ENCODE measurements at regions of chr13 and their contacts with region 1.

Region 1: DNA sequence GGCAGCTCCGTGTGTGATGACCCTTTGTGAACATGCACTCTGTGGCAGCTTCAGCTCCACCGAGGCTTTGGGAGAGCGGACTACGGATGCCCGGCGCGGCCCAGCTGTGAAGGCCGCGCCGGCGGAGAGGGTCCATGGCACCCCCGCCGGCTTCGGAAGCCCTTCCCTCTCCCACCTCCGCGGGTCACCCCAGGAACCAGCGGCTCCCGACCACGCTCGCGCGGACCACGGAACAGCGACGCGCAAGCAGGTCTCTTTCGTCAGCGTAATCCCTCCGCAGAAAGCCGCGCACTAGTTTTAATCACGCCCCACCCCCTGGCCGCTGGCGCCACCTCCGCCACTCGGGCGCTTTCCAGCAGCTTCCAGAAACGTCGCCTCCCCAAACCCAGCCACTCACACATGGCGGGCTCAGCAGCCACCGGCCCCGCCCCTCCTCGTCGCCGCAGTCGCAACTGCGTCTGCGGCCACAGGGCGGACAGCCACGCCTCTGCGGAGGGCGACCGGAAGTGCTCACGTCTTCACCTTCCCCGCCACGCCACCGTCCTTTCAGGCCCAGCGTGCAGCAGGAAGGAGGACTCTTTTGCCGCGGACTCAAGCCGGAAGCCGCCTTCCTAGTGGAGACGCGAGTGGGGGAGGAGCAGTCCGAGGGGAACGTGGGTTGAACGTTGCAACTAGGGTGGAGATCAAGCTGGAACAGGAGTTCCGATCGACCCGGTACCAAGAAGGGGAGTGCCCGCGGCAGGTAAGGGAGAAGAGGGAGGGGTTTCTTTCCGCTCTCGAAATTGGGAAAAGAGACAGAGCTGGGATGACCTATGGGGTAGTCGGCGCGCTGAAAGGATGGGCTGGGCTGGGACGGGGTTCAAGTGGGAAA is at the start of gene USPL1:
- DNase-seq: peak; percentile 98
- ATAC-seq: peak; percentile 84
- H3K4me3 Mint-ChIP-seq: no peak within 1 kb of the TSS
- H3K27ac Mint-ChIP-seq: no peak within 1 kb of the TSS
- H3K4me1 Mint-ChIP-seq: peaks cover 37% of the 10 kb centered on the region
- H3K27me3 Mint-ChIP-seq: no peaks in the 10 kb centered on the region
- CTCF ChIP-seq: no peak
- total RNA-seq, gene USPL1: 29.1 and 33.6 TPM in 2 replicates

Region 2: GRCh38 chr13:29595380-29596063 is 1022.0 kb before region 1 on chr13 and contains the start of gene SLC7A1:
- CTCF ChIA-PET with region 1: no interaction called
- POLR2A ChIA-PET with region 1: interaction called, 6 read pairs
- intact Hi-C with region 1: loop called (anchors 2 kb)
- DNase-seq: peak; percentile 82
- ATAC-seq: peak; percentile 87
- H3K4me3 Mint-ChIP-seq: peak within 1 kb of the TSS; percentile 91
- H3K27ac Mint-ChIP-seq: peak within 1 kb of the TSS; percentile 88
- H3K4me1 Mint-ChIP-seq: peaks cover 33% of the 10 kb centered on the region
- H3K27me3 Mint-ChIP-seq: peaks cover 1% of the 10 kb centered on the region
- CTCF ChIP-seq: no peak
- total RNA-seq, gene SLC7A1: 83.5 and 85.0 TPM in 2 replicates

Region 3: GRCh38 chr13:30306762-30307193 is 310.8 kb before region 1 on chr13:
- CTCF ChIA-PET with region 1: no interaction called
- POLR2A ChIA-PET with region 1: interaction called, 20 read pairs
- intact Hi-C with region 1: loop called (anchors 1 kb)
- DNase-seq: peak; percentile 86
- ATAC-seq: peak; percentile 86
- H3K4me3 Mint-ChIP-seq: peak overlapping the region; percentile 90
- H3K27ac Mint-ChIP-seq: peak overlapping the region; percentile 85
- H3K4me1 Mint-ChIP-seq: peaks cover 72% of the 10 kb centered on the region
- H3K27me3 Mint-ChIP-seq: no peaks in the 10 kb centered on the region
- CTCF ChIP-seq: no peak

Region 4: GRCh38 chr13:30408319-30409101 is 209.0 kb before region 1 on chr13:
- CTCF ChIA-PET with region 1: no interaction called
- POLR2A ChIA-PET with region 1: interaction called, 6 read pairs
- intact Hi-C with region 1: loop called (anchors 1 kb)
- DNase-seq: peak; percentile 85
- ATAC-seq: peak; percentile 94
- H3K4me3 Mint-ChIP-seq: peak overlapping the region; percentile 62
- H3K27ac Mint-ChIP-seq: peak overlapping the region; percentile 79
- H3K4me1 Mint-ChIP-seq: peaks cover 53% of the 10 kb centered on the region
- H3K27me3 Mint-ChIP-seq: no peaks in the 10 kb centered on the region
- CTCF ChIP-seq: no peak

Region 5: DNA sequence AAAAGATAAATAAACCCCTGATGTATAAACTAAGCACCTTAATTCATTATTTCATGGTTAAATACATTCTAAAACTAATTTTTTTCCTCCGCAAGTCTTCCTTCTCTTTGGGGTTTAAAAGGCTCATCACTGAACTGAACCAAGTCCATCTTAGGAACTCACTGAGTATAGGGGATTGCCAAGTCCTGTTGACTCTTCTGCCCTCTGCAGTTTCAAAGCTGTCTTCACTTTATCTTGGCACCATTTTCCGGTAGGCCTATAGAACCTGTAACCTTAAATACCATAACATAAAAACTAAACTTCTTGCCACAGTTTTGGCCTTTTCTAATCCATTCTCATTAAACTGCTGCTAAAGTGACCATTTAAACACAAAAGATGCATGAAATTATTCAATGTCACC is 66.4 kb before region 1 on chr13:
- CTCF ChIA-PET with region 1: interaction called, 3 read pairs
- POLR2A ChIA-PET with region 1: no interaction called
- intact Hi-C with region 1: loop called (anchors 1 kb)
- DNase-seq: no peak
- ATAC-seq: peak; percentile 85
- H3K4me3 Mint-ChIP-seq: no peak overlapping the region
- H3K27ac Mint-ChIP-seq: no peak overlapping the region
- H3K4me1 Mint-ChIP-seq: peaks cover 11% of the 10 kb centered on the region
- H3K27me3 Mint-ChIP-seq: no peaks in the 10 kb centered on the region
- CTCF ChIP-seq: no peak

Region 6: GRCh38 chr13:30639671-30640070 is 22.1 kb after region 1 on chr13:
- CTCF ChIA-PET with region 1: no interaction called
- POLR2A ChIA-PET with region 1: interaction called, 9 read pairs
- intact Hi-C with region 1: loop called (anchors 2 kb)
- DNase-seq: no peak
- ATAC-seq: no peak
- H3K4me3 Mint-ChIP-seq: no peak overlapping the region
- H3K27ac Mint-ChIP-seq: no peak overlapping the region
- H3K4me1 Mint-ChIP-seq: peaks cover 30% of the 10 kb centered on the region
- H3K27me3 Mint-ChIP-seq: no peaks in the 10 kb centered on the region
- CTCF ChIP-seq: no peak

Region 7: GRCh38 chr13:30739761-30740642 is 122.5 kb after region 1 on chr13:
- CTCF ChIA-PET with region 1: interaction called, 3 read pairs
- POLR2A ChIA-PET with region 1: interaction called, 77 read pairs
- intact Hi-C with region 1: loop called (anchors 1 kb)
- DNase-seq: no peak
- ATAC-seq: peak; percentile 26
- H3K4me3 Mint-ChIP-seq: peak overlapping the region; percentile 74
- H3K27ac Mint-ChIP-seq: peak overlapping the region; percentile 72
- H3K4me1 Mint-ChIP-seq: peaks cover 91% of the 10 kb centered on the region
- H3K27me3 Mint-ChIP-seq: no peaks in the 10 kb centered on the region
- CTCF ChIP-seq: no peak

Region 8: DNA sequence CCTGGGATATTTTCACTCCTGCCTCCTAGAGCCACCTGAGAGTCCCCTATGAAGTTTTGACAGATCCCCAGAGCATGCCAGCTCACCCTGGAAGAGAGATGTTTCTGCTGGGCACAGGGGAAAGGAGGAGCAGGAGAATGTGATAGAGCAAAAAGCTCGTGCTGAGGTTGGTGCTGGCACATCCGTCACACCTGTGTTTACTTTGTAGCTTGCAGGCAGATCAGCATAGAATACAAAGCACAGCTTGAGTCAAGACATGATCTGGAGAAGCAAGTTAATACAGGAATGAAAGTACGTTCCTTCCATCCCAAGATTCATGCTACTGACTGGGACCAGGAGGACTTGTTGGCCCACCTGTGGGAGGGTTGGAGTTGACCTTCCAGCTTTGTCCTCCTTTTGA is 498.1 kb after region 1 on chr13:
- CTCF ChIA-PET with region 1: no interaction called
- POLR2A ChIA-PET with region 1: no interaction called
- intact Hi-C with region 1: no loop called
- DNase-seq: no peak
- ATAC-seq: no peak
- H3K4me3 Mint-ChIP-seq: no peak overlapping the region
- H3K27ac Mint-ChIP-seq: no peak overlapping the region
- H3K4me1 Mint-ChIP-seq: no peaks in the 10 kb centered on the region
- H3K27me3 Mint-ChIP-seq: peaks cover 32% of the 10 kb centered on the region
- CTCF ChIP-seq: no peak